ENCODE measurements at regions of chr16 and their contacts with region 1.

Region 1: GRCh38 chr16:53503270-53503923 is 388 bp upstream of the AKTIP start:
- DNase-seq: peak; percentile 99 to 100 (median 99)
- ATAC-seq: peak; percentile 89
- H3K4me3 ChIP-seq: peak overlapping the region; percentile 74 to 78
- H3K4me3 Mint-ChIP-seq: peak overlapping the region; percentile 92
- H3K27ac ChIP-seq: peak overlapping the region; percentile 77 to 88
- H3K27ac Mint-ChIP-seq: peak overlapping the region; percentile 97
- H3K4me1 ChIP-seq: peaks cover 41% of the 10 kb centered on the region
- H3K4me1 Mint-ChIP-seq: peaks cover 48% of the 10 kb centered on the region
- H3K27me3 ChIP-seq: no peaks in the 10 kb centered on the region
- H3K27me3 Mint-ChIP-seq: no peaks in the 10 kb centered on the region
- CTCF ChIP-seq: no peak

Region 2: DNA sequence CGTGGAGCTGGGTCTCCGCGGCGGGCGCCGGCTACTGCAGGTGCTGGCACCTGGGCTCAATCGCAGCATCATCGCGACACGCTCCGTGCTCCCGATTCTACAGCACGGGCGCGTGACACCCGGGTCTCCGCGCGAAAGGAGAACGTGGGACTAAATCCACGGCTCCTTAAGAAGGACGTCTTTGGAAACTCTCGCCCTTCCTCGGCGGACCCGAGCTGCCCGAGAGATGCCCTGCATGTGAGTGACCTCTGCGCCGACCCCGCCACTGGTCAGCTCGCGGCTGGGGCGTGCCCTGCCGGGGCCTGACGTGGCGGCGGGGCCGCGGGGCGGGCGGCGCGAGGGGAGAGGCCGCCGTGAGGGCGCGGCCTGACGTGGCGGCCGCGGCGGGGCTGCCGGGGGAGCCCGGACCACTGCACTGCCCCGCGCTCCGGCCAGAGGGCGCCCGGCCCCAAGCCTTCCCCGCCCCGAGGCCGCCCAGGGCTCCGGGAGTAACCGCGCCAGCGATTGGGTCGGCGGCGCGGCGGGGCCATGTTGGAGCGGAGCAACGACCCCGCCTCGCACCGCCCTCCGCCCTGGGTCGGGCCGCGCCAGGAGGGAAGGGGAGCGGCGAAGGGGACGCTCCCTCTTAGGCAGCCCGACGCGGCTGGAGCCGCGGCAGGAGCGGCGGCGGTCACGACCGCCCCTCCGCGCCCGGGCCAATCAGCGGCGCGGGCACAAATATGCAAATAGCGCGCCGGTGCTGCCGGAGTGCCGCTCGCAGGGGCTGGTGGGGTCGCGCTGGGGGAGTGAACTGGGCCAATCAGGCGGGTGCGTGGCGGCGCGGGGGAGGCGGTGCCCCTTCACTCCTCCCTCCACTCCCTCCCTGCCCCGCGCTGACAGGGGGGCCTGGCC is 373.0 kb before region 1 on chr16:
- CTCF ChIA-PET with region 1: no interaction called
- POLR2A ChIA-PET with region 1: no interaction called
- intact Hi-C with region 1: loop called (anchors 1 to 2 kb)
- DNase-seq: peak; percentile 88 to 97 (median 96)
- ATAC-seq: peak; percentile 91
- H3K4me3 ChIP-seq: peak overlapping the region; percentile 76 to 92
- H3K4me3 Mint-ChIP-seq: peak overlapping the region; percentile 84
- H3K27ac ChIP-seq: peak overlapping the region; percentile 52 to 66
- H3K27ac Mint-ChIP-seq: peak overlapping the region; percentile 86
- H3K4me1 ChIP-seq: no peaks in the 10 kb centered on the region
- H3K4me1 Mint-ChIP-seq: peaks cover 20% of the 10 kb centered on the region
- H3K27me3 ChIP-seq: no peaks in the 10 kb centered on the region
- H3K27me3 Mint-ChIP-seq: no peaks in the 10 kb centered on the region
- CTCF ChIP-seq: no peak

Region 3: DNA sequence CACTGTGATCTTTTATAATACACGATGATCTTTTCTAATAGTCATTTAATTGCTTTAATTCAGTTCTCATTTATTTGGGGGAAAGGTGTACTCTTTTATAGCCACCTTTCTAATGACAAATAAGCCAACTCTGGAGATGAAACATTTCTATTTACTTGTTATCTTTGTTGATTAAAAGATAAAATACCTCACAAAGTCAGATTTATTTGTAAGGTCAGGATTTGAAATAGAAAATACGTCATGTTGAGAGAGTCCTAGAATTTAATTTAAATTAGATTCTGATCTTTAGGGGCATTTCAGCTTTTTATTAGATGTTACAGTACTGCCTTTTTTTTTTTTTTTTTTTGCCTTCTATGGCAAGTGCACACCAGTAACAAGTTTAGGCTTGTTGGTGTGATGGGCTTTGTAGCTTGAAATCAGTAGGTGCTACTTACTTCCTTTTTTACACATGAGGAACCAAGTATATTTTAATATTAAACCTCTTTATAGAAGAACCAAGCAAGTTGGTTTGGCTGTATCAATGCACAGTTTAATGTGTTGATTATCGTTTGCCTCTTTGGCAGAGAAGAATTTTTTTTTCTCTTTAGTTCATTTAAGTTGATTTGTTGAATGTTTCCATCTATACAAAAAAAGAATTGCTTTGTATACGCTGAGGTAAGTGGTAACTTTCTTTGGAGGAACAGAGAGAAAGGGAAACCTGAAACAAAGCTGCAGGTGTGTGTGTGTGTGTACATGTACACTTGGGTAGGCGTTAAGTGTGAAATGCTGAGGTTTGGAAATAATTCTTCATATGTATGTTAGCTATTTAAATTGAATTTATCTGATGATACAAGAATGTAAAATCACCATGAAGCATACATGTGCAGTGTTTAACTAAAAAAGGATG is 53.5 kb before region 1 on chr16:
- CTCF ChIA-PET with region 1: interaction called, 4 read pairs
- POLR2A ChIA-PET with region 1: interaction called, 53 read pairs
- intact Hi-C with region 1: no loop called
- DNase-seq: peak in 2 of 9 experiments; percentile 22 to 47
- ATAC-seq: peak; percentile 39
- H3K4me3 ChIP-seq: peak overlapping the region; percentile 38 to 44
- H3K4me3 Mint-ChIP-seq: peak overlapping the region; percentile 88
- H3K27ac ChIP-seq: peak overlapping the region; percentile 33 to 45
- H3K27ac Mint-ChIP-seq: peak overlapping the region; percentile 90
- H3K4me1 ChIP-seq: peaks cover 64% of the 10 kb centered on the region
- H3K4me1 Mint-ChIP-seq: peaks cover 76% of the 10 kb centered on the region
- H3K27me3 ChIP-seq: no peaks in the 10 kb centered on the region
- H3K27me3 Mint-ChIP-seq: no peaks in the 10 kb centered on the region
- CTCF ChIP-seq: no peak

Region 4: GRCh38 chr16:53489755-53490154 is 13.6 kb before region 1 on chr16:
- CTCF ChIA-PET with region 1: interaction called, 4 read pairs
- POLR2A ChIA-PET with region 1: interaction called, 21 read pairs
- intact Hi-C with region 1: loop called in 1 of 2 experiments (anchors 2 kb)
- DNase-seq: no peak
- ATAC-seq: no peak
- H3K4me3 ChIP-seq: no peak overlapping the region
- H3K4me3 Mint-ChIP-seq: no peak overlapping the region
- H3K27ac ChIP-seq: no peak overlapping the region
- H3K27ac Mint-ChIP-seq: peak overlapping the region; percentile 62
- H3K4me1 ChIP-seq: peaks cover 17% of the 10 kb centered on the region
- H3K4me1 Mint-ChIP-seq: peaks cover 66% of the 10 kb centered on the region
- H3K27me3 ChIP-seq: no peaks in the 10 kb centered on the region
- H3K27me3 Mint-ChIP-seq: no peaks in the 10 kb centered on the region
- CTCF ChIP-seq: no peak

Region 5: DNA sequence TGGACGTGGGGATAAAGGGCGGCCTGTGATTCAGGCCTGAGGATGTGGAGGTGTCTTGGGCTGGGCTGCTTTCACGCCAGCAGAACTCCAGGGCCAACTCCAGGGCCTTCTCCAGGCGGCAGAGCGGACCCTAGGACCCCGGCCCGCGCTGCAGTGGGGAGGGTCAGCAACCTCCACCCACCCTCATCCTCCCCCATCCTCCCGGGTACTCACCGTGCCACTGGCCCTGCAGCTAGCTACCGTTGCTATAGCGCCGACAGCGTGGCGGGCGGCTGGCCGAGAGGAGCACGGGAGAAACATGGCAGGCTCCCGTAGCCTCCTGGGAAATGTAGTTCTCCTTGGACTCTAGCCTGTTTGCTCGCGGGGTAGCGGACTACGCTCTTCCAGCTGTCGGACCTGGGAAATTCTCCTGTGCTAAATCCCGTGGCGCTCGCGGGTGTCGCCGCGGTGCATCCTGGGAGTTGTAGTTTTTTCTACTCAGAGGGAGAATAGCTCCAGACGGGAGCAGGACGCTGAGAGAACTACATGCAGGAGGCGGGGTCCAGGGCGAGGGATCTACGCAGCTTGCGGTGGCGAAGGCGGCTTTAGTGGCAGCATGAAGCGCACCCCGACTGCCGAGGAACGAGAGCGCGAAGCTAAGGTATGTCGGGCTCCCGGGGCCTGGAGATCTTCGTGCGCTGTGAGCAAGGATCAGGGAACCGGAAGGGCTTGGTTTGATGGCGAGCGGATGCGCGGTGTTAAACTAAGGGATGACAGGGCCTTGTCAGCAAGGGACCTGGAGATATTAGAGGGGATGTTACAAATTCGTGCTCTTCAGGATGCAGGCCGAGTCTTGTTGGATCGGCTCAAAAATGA is 200.4 kb after region 1 on chr16 and contains the starts of genes FTO and RPGRIP1L:
- CTCF ChIA-PET with region 1: no interaction called
- POLR2A ChIA-PET with region 1: no interaction called
- intact Hi-C with region 1: loop called (anchors 1 to 2 kb)
- DNase-seq: peak; percentile 89 to 98 (median 95)
- ATAC-seq: peak; percentile 90
- H3K4me3 ChIP-seq: peak within 1 kb of the TSS; percentile 75 to 86
- H3K4me3 Mint-ChIP-seq: peak within 1 kb of the TSS; percentile 96
- H3K27ac ChIP-seq: peak within 1 kb of the TSS; percentile 61 to 68
- H3K27ac Mint-ChIP-seq: peak within 1 kb of the TSS; percentile 95
- H3K4me1 ChIP-seq: peaks cover 21% of the 10 kb centered on the region
- H3K4me1 Mint-ChIP-seq: peaks cover 48% of the 10 kb centered on the region
- H3K27me3 ChIP-seq: no peaks in the 10 kb centered on the region
- H3K27me3 Mint-ChIP-seq: no peaks in the 10 kb centered on the region
- CTCF ChIP-seq: no peak
- total RNA-seq, gene FTO: 30.4 to 32.9 TPM
- total RNA-seq, gene RPGRIP1L: 1.5 to 2.2 TPM